ENCODE measurements at regions of chr1 and their contacts with region 1.

Region 1: DNA sequence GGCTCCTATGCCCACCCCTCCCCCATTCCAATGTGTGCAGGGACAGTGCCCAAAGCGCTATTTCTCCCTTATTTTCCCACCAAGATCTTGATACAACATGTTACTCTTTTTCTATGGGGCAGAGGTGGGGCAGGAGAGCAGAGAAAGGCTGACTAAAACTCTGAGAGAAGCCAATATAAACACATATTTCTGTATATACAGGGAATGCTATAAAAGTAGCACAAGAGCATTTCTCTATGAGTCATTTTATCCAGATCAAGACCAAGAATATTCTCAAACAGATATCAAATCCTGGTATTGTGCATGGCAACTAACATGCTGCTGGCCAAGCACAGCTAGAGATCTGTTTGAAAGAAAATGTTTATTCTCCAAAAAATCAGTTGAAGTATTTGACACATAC is 7.3 kb downstream of the WDR26 start:
- DNase-seq: no peak
- ATAC-seq: no peak
- H3K4me3 ChIP-seq: no peak overlapping the region
- H3K27ac ChIP-seq: no peak overlapping the region; the same call in 1 of the 2 replicates
- H3K4me1 ChIP-seq: peaks cover 13% of the 10 kb centered on the region
- H3K27me3 ChIP-seq: no peaks in the 10 kb centered on the region
- CTCF ChIP-seq: no peak
- EP300 ChIP-seq: no peak
- POLR2A ChIP-seq: no peak
- RAD21 ChIP-seq: no peak

Region 2: GRCh38 chr1:224387302-224387912 is 39.9 kb before region 1 on chr1:
- CTCF ChIA-PET with region 1: interaction called, 3 read pairs
- POLR2A ChIA-PET with region 1: interaction called, 5 read pairs
- RAD21 ChIA-PET with region 1: no interaction called
- SMC1A ChIA-PET with region 1: no interaction called
- in situ Hi-C with region 1: no loop called
- intact Hi-C with region 1: loop called (anchors 5 kb)
- DNase-seq: no peak
- ATAC-seq: no peak; the same call in 2 of the 3 replicates
- H3K4me3 ChIP-seq: no peak overlapping the region
- H3K27ac ChIP-seq: no peak overlapping the region
- H3K4me1 ChIP-seq: no peaks in the 10 kb centered on the region
- H3K27me3 ChIP-seq: no peaks in the 10 kb centered on the region
- CTCF ChIP-seq: no peak
- EP300 ChIP-seq: no peak
- POLR2A ChIP-seq: no peak
- RAD21 ChIP-seq: no peak

Region 3: DNA sequence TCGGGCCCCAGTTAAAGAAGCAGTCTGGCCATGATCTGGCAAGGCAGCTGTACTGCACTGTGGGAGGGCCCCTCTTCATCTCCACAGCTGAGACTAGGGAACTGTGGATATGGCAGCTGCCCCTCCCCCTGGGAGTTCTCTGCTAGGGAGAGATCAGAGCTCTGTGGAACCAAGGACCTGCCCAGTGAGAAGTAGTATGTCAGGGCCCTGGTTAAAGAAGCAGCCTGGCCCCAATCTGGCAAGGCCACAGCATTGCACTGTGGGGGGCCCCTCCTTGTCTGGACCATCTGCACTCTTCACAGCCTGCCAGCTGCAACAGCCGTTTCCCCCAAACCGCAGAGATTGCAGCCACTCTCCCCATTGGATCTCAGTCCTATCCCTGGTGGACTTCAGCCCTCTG is 710.6 kb after region 1 on chr1:
- CTCF ChIA-PET with region 1: no interaction called
- POLR2A ChIA-PET with region 1: no interaction called
- RAD21 ChIA-PET with region 1: no interaction called
- SMC1A ChIA-PET with region 1: no interaction called
- in situ Hi-C with region 1: no loop called
- intact Hi-C with region 1: no loop called
- DNase-seq: no peak
- ATAC-seq: no peak
- H3K4me3 ChIP-seq: no peak overlapping the region
- H3K27ac ChIP-seq: no peak overlapping the region
- H3K4me1 ChIP-seq: no peaks in the 10 kb centered on the region
- H3K27me3 ChIP-seq: no peaks in the 10 kb centered on the region; a peak in 1 of 4 replicates
- CTCF ChIP-seq: no peak
- EP300 ChIP-seq: no peak
- POLR2A ChIP-seq: no peak
- RAD21 ChIP-seq: no peak

Measured in GM12878 (cell line).